Body of pancreas (tissue), 4 donors: ENCODE measurements at regions of chr17 and their contacts with region 1.

Region 1: GRCh38 chr17:4623249-4623648 is 18.2 kb downstream of the ALOX15 start:
- DNase-seq: no peak
- ATAC-seq: no peak
- H3K4me3 ChIP-seq: no peak overlapping the region
- H3K27ac ChIP-seq: no peak overlapping the region
- H3K4me1 ChIP-seq: no peaks in the 10 kb centered on the region
- H3K27me3 ChIP-seq: no peaks in the 10 kb centered on the region
- CTCF ChIP-seq: no peak
- POLR2A ChIP-seq: no peak

Region 2: DNA sequence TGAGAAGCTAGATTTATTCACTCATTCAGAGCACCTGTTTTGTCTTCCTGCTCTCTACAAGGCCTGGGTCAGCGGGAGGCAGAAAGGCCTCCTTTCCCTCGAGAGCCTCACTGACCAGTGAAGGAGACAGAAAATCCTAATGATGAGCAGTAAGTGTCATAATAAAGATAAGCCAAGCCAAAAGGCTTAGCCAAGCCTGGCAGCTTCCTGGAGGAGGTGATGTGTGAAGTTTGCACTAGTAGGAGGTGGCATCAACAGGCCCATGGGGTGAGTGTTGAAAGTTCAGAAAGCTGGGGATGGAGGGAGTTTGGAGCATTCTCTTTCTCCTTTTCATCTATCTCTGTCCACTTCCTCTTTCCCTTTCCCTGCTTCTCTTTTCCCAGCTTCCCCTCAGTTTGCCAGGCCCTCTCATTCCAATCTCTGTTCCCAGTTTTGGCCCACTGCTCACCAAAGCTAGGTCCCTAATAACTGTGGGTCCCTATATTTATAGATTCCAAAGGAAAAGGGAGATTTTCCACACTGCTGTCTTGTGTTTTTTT is 206.1 kb before region 1 on chr17:
- intact Hi-C with region 1: loop called (anchors 5 kb)
- DNase-seq: no peak
- ATAC-seq: no peak
- H3K4me3 ChIP-seq: no peak overlapping the region
- H3K27ac ChIP-seq: no peak overlapping the region
- H3K4me1 ChIP-seq: peaks cover 4% of the 10 kb centered on the region
- H3K27me3 ChIP-seq: no peaks in the 10 kb centered on the region
- CTCF ChIP-seq: no peak
- POLR2A ChIP-seq: no peak

Region 3: DNA sequence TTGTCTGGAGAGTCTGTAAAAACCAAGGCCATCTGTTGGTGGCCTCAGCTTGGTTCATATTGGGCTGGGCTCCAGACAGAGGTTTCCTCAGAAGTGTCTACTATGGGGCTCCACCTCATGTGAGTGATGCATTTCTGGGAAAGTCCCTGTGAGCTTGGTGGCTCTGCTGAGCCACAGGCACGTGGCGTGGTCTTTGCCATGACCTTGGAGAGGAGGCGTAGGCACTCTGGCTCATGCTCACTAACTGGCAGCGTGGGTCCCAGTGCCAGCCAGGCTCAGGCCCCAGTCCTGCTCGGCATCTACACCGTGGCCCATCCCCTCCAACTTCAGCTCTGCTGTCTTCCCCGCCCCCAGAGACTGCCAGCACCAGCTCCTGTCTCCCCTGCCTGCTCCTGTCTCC is 49.6 kb before region 1 on chr17:
- intact Hi-C with region 1: loop called (anchors 5 kb)
- DNase-seq: peak in 1 of 4 donors; percentile 39
- ATAC-seq: peak; percentile 67
- H3K4me3 ChIP-seq: no peak overlapping the region
- H3K27ac ChIP-seq: no peak overlapping the region
- H3K4me1 ChIP-seq: no peaks in the 10 kb centered on the region
- H3K27me3 ChIP-seq: no peaks in the 10 kb centered on the region
- CTCF ChIP-seq: no peak
- POLR2A ChIP-seq: no peak